Posterior vena cava (tissue), 2 donors: ENCODE measurements at regions of chr1 and their contacts with region 1.

Region 1: DNA sequence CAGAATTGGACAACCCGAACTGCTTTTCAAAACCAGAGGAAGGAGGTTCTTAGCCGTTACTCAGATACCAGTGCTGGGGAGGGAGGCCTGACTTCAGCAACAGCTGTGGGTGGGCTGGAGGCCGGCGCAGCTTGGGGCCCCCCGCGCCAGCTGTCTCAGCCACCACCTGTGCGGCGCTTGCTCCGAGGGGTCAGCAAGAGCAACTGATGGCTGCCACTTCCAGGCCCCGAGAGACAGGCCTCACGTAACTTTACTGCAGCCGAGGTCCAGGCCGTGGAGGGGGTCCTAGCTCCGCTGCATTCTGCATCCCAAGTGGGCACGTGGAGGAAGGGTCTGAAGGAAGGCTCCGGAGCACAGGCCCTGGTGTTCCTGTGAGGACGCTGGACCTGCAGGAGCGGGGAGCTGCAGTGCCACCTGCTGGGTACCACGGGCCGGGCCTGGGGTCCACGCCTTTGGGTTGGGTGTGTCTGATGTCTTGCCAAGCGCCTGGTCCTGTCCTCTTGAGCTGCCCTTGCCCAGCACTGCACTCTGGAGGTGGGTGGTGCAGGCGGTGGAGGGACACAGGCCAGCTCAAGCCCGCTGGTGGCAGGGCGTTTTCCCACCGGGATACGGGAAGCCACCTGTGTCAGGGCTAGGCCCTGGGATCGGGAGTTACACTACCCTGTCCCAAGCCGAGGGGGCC is 9.8 kb downstream of the THAP3 start:
- DNase-seq: peak; percentile 88

Region 2: DNA sequence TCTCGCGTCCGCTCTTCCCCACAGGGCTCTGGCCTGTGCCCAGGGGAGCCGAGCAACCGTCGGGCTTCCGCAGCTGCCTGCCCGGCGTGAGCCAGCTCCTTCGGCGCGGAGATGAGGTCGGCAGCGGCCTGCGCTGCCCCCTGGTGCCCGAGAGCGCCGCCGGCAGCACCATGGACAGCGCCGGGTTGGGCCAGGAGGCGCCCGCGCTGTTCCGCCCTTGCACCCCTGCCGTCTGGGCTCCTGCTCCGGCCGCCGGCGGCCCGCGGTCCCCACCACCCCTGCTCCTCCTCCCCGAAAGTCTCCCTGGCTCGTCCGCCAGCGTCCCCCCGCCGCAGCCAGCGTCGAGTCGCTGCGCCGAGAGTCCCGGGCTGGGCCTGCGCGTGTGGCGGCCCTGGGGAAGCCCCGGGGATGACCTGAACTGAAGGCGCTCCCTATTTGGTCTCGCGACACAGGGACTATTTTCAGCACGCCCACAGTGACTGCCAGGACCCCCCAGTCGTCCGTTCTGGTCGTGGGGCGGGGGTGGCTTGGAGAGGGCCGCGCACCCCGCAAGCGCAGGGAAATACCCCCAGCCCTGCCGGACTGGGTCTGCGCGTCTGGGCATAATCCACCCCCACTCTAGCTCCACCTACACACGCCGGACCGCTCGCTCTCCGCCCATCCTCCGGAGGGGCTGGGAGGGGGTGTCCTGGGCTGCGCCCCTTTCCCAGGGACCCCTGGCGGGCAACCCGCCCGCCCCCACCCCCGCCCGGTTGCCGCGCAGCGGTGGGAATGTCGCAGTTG is 389.2 kb before region 1 on chr1:
- intact Hi-C with region 1: no loop called
- DNase-seq: peak; percentile 95

Region 3: GRCh38 chr1:6554031-6554906 is 80.2 kb before region 1 on chr1 and contains the start of gene NOL9:
- intact Hi-C with region 1: loop called in 1 of 2 experiments (anchors 10 kb)
- DNase-seq: peak; percentile 99
- total RNA-seq, gene NOL9: 21.2 to 23.9 TPM

Region 4: DNA sequence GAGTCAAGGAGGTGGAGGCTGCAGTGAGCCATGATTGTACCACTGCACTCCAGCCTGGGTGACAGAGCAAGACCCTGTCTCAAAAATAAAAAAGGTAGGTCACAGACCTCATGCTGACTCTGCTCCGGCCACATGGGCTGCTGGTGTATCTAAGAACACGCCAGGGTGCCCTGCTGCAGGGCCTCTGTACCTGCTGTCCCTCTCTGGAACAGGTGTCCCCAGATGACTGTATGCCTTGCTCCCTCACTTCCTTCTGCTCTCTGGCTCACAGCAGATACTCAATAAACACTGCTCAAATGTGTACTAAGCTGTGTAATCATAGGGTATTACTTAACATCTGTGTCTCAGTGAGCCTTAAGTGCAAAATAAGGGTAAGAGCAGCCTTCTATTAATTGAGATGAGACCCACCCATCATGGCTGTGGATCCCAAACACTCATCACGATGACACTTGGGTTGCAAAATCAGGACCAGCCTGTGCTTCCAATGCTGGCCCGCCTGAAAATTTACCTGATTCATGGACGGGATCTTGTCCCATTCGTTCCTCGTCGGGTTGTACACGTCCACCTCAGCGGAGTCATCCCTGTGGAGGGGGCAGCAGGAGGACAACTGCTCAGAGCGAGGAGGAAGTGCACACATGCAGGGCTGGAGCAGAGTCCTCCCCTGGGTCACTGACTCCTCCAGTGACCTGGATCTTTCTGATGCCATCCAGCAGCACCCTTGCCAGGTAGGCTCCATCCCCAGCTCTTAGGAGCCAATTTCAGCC is 39.4 kb before region 1 on chr1:
- intact Hi-C with region 1: loop called in 1 of 2 experiments (anchors 2 kb)
- DNase-seq: no peak

Region 5: DNA sequence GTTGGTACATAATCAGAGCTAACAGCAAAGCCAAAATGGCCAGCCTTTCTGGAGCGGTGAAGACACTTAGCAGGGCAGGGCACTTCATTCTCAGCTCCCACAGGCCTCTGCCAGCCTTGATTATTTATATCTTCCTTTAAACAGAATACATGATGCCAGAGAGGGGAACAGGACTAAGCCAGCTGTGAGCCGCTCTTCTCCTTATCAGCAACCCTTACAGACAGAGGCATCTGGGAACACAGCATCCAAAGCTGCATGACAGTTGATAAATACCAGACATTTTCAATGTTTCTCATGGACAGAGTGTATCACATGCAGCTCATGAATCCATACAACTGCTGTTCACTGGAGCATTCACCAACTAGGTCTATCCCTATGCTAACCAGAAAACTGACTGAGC is 38.0 kb after region 1 on chr1:
- intact Hi-C with region 1: no loop called
- DNase-seq: no peak